ENCODE measurements at regions of chr2 and their contacts with region 1.

Region 1: DNA sequence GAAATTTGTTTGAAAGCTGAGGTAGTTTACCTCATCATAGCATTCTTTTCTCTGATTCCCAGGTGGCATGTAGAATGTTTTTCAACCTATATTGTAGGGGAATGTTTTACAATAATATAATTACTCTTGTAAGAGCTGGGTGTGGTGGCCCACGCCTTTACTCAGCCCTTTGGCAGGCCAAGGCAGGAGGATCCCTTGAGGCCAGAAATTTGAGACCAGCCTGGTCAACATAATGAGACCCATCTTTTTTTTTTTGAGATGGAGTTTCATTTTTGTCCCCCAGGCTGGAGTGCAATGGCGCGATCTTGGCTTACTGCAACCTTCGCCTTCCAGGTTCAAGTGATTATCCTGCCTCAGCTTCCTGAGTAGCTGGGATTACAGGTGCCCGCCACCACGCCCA is 3.6 kb downstream of the USP39 start:
- DNase-seq: no peak
- H3K4me3 Mint-ChIP-seq: no peak overlapping the region
- H3K27ac Mint-ChIP-seq: no peak overlapping the region
- H3K4me1 Mint-ChIP-seq: peaks cover 9% of the 10 kb centered on the region
- H3K27me3 Mint-ChIP-seq: no peaks in the 10 kb centered on the region
- CTCF ChIP-seq: no peak

Region 2: DNA sequence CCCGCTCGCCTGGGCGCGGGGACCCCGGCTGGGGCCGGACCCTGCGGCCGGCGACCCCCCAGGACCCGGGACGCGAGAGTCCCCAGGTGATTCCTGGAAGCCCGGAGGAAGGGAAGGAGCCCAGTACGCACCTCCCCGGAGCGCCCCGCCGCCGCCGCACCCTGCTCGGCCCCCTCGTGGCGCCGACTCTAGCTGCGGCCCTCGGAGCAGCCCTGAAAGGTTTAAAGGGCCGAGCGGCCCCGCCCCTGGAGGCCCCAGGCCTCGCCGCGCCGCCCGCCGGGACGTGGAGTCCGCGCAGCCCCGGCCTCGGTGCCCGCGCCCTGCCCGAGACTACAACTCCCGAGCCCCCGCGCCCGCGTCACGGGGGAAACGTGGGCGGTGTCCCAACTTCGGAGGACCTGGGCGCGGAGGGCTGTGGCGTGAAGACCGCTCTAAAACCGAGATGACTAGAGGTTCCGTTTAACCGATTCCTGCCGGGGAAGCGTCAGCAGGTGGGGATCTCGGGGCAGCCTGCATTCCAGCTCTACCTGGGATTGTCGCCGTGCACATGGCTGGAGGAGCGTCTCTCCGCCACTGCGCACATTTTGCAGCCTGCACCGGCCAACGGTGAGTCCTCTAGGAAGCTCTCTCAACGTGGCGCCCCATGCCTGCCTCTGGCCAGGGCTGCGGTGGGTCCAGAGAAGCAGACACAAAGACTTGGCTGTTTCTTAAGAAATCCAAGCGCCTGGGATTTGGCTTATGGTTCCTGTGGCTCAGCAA is 17.0 kb before region 1 on chr2 and contains the start of gene TMEM150A:
- CTCF ChIA-PET with region 1: interaction called, 4 read pairs
- POLR2A ChIA-PET with region 1: interaction called, 34 read pairs
- intact Hi-C with region 1: no loop called
- DNase-seq: peak; percentile 90
- H3K4me3 Mint-ChIP-seq: peak within 1 kb of the TSS; percentile 79
- H3K27ac Mint-ChIP-seq: peak within 1 kb of the TSS; percentile 70
- H3K4me1 Mint-ChIP-seq: peaks cover 12% of the 10 kb centered on the region
- H3K27me3 Mint-ChIP-seq: no peaks in the 10 kb centered on the region
- CTCF ChIP-seq: peak; percentile 30
- total RNA-seq, gene TMEM150A: 12.5 and 14.5 TPM in 2 replicates

Region 3: DNA sequence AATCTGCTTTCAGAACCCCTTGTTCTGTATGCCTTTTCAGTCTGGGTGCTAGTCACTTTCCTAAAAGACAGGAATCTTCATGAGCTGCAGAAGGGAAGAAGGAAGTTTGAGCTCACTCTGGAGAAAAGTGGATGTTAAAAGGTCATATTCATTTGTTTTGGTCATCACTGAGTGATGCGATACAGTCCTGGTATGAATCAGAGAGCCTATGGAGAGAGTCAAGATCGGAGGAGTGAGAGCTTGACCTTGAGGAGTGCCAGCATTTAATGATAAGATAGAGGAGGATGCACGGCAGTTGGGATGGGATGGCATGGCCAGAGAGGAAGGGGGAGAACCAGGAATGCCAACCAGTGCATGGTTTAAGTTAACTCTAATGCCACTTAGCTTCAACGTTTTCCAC is 16.0 kb after region 1 on chr2:
- CTCF ChIA-PET with region 1: interaction called, 47 read pairs
- POLR2A ChIA-PET with region 1: interaction called, 5 read pairs
- intact Hi-C with region 1: no loop called
- DNase-seq: no peak
- H3K4me3 Mint-ChIP-seq: no peak overlapping the region
- H3K27ac Mint-ChIP-seq: peak overlapping the region; percentile 28
- H3K4me1 Mint-ChIP-seq: peaks cover 13% of the 10 kb centered on the region
- H3K27me3 Mint-ChIP-seq: no peaks in the 10 kb centered on the region
- CTCF ChIP-seq: no peak